ENCODE measurements at regions of chr11 and their contacts with region 1.

Region 1: DNA sequence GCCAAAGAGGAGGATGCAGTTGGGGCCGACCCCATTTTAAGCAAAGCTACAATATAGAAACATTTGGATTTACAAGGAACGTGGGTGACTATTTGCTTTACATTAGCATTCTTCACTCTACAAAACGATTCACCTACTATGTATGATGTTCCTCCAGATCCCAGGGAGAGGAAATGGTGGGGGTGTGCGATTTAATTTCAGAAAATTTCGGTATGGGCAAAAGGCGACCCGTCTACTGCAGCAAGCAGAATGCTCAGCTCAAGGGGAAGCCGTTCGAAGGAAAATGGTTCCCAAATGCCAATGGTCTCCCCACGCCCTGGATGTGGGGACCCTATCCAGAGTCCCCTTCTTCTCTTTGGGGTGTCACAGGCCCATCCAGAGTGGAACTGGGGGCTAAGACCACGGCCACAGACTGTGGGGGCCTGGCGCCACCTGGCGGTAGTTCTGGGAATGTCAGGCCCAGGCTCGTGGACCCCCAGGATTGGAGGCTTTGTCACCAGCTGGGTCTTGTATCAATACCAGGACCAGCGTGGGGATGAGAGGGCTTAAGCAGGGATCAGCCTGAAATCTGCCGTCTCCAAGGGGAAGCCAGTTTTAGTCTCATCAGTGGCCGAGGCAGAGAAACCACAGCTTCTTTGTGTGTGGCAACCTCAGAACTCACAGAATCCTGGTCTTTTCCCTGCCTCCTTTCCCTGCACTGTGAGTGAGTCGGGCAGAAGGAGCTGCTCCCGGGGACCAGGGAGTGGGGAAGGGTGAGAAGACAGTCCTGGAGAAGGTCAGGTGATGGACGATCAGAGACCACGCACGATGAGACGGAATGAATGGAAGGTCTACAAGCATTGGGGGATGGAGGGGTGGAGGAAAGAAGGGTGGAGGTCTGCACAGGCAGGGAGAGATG is 8.4 kb downstream of the LRRC10B start:
- DNase-seq: no peak
- H3K4me3 ChIP-seq: no peak overlapping the region
- CTCF ChIP-seq: peak; percentile 94

Region 2: DNA sequence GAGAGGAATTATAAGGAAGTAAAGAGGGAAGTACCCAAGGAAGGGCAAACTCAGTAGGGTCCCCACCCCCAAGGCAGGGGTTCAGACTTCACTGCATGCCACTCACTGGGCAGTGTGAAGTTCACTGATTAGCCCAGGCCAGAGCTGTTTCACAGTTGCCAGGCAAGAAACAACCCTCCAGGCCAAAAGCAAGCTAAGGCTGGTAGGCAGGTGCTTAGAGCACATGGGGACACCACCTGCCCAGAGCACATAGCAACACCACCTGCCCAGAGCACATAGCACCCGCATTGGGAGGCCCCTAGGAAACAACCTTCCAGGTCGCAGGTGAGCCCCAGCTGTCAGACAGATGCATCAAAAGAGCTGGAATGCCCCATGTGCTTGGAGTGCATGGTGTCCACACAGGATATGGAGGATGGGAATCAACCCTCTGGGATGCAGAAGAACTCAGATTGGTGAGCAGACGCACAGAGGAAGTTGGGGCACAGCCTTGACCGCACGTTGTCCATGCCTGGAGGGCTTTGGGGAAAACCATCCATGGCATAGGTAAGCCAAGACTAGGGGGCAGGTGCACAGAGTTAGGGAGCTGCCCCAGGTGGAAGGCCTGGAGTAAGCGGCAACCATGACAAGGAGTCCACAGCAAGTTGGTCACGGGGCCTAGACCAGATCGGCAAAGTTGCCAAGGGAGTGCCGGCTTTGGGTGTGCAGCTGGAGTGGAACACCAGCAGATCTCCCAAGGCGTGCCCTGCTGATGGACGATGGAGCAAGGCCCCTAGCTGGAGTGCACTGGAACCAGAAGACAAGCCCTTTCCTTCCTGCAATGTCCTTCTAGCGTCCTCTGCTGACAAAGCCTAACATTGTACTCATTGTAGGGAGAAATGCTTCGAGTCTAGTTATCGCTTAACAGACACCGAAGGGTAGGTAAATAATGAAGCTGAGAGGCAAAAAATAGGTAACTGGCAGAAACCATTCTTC is 132.4 kb before region 1 on chr11:
- CTCF ChIA-PET with region 1: no interaction called
- POLR2A ChIA-PET with region 1: no interaction called
- DNase-seq: no peak
- H3K4me3 ChIP-seq: no peak overlapping the region
- CTCF ChIP-seq: peak; percentile 32

Region 3: DNA sequence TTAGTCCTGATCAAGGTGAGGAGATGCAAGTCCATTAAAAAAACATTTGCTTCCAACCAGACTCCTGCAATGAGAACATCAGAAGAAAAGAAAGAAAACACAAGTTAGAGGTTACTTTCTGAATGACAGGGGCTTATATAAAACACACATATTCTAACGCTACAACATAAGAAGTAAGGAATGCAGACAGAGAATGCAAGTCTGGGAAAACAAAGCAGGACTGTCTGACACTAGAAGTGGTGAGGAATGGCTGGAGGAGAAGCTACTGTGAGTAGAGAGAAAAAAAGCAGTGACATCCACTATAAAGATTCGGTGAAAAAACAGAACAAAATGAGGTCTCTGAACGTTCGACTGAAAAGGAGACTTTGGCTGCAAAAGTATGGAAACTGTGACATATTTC is 112.3 kb before region 1 on chr11:
- CTCF ChIA-PET with region 1: no interaction called
- POLR2A ChIA-PET with region 1: no interaction called
- DNase-seq: no peak
- H3K4me3 ChIP-seq: no peak overlapping the region
- CTCF ChIP-seq: no peak

Region 4: GRCh38 chr11:61439615-61440014 is 77.3 kb before region 1 on chr11:
- CTCF ChIA-PET with region 1: interaction called, 215 read pairs
- POLR2A ChIA-PET with region 1: no interaction called
- DNase-seq: no peak
- H3K4me3 ChIP-seq: no peak overlapping the region
- CTCF ChIP-seq: no peak

Region 5: DNA sequence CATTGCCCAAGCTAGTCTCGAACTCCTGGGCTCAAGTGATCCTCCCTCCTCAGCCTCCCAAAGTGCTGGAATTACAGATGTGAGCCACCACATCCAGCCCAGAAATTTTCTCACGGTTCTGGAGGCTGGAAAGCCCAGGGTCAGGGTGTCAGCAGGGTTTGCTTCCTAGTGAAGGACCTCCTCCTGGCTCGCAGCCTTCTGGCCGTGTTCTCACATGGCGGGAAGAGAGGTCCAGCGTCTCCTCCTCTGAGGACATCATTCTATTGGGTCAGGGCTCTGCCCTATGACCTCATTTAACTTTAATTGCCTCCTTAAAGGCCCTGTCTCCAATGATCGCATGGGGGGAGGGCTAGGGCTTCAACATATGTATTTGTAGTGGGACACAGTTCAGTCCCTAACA is 48.9 kb before region 1 on chr11:
- CTCF ChIA-PET with region 1: interaction called, 165 read pairs
- POLR2A ChIA-PET with region 1: no interaction called
- DNase-seq: no peak
- H3K4me3 ChIP-seq: no peak overlapping the region
- CTCF ChIP-seq: no peak

Region 6: DNA sequence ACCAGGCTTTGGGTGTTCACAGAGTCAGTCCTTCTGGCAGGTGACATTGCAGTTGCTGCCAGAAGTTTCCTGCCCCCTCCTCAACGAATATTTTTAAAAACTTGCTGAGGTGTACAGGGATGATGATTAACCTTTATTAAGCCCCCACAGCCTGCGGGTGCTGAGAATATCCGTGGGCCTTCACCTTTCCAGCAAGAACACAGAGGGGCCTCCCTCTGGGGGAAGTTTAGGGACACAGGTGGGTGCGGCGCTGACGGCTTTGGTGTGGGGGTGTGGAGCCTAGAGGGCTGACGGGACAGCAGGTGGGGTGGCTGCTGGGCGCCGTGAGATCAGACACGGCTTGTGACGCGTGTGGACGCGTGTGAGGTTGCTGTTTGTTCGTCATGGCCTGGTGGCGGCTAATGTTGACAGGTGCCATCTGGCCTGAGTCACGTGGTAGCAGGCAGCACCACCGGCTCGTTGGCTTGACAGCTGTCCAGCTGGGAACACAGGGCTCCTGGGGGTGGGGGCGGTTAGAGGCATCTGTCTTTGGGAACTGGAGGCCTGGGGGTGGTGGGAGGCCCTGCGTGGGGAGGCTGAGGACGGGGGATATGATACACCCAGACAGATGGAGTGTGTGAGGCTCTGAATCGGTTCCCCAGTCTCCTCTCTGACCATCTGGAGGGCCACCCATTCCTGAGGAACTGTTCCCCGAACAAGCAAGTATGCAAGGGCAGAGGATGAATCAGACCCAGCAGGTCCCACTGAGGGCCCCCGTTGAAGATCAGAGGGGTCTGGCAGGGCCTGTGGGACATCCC is 20.9 kb before region 1 on chr11:
- CTCF ChIA-PET with region 1: interaction called, 55 read pairs
- POLR2A ChIA-PET with region 1: no interaction called
- DNase-seq: no peak
- H3K4me3 ChIP-seq: no peak overlapping the region
- CTCF ChIP-seq: no peak

Region 7: GRCh38 chr11:61541598-61541997 is 24.7 kb after region 1 on chr11:
- CTCF ChIA-PET with region 1: interaction called, 57 read pairs
- POLR2A ChIA-PET with region 1: no interaction called
- DNase-seq: no peak
- H3K4me3 ChIP-seq: no peak overlapping the region
- CTCF ChIP-seq: no peak

Region 8: DNA sequence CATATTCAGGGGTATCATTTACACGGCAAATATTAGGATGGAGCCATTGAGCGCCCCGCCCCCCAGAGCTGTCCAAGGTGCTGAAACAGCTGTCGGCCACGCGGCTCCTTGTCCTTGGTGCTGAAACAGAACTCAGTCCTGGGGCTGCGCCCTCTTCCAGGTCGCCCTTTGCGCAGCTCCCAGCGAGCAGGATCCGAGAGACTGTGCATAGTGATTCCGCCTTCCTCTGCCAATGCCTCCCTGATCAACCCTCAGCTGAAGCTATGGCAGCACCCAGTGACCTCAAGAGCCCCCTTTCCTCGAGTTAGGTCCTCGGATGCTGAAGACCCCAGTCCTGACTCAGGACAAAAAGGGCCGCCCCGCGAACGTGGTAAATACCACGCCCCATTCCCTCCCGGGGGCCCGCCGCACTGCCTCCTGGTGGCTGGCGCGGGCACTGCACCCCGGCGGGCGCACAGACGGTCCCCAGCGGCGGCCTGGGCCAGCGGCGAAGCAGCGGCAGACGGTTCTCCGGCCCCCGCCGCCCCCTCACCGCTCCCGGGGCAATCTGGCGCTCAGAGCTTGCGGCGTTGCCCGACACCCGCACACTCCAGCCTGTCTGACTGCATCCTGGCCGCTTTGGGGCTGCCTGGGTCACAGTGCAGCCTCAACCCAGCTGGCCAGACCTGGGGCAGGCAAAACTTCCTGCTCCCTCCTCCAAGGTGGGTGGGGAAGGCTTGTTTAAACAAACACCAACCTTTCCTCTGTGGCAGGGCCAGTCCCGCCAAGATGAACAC is 50.5 kb after region 1 on chr11:
- CTCF ChIA-PET with region 1: interaction called, 15 read pairs
- POLR2A ChIA-PET with region 1: no interaction called
- DNase-seq: no peak
- H3K4me3 ChIP-seq: no peak overlapping the region
- CTCF ChIP-seq: peak; percentile 26